Calu3 (cell line): ENCODE measurements at regions of chr22 and their contacts with region 1.

Region 1: GRCh38 chr22:33853200-33854097 is 66.8 kb downstream of the LARGE1 start:
- DNase-seq: peak; percentile 64
- H3K4me3 Mint-ChIP-seq: peak overlapping the region; percentile 77
- H3K27ac Mint-ChIP-seq: peak overlapping the region; percentile 87
- H3K4me1 Mint-ChIP-seq: peaks cover 8% of the 10 kb centered on the region
- H3K27me3 Mint-ChIP-seq: no peaks in the 10 kb centered on the region
- CTCF ChIP-seq: no peak

Region 2: DNA sequence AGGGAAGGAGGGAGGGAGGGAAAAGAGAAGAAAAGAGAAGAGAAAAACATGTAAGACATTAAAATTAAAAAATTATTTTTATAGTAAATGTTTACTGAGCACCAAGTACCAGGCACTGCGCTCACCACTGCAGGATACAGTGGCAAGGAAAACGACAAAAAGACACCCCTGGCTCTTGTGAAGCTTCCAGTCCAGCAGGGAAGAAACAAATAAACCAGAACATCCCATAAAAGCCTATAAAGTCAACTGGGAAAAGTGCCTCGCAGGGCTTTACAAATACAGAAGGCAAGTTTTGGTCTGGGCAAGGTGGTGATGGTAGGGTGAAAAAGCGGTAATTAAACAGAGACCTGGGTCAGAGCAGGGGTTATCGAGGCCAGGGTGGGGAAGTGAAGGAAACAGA is 33.2 kb after region 1 on chr22:
- CTCF ChIA-PET with region 1: interaction called, 10 read pairs
- intact Hi-C with region 1: no loop called
- DNase-seq: no peak
- H3K4me3 Mint-ChIP-seq: no peak overlapping the region
- H3K27ac Mint-ChIP-seq: no peak overlapping the region
- H3K4me1 Mint-ChIP-seq: no peaks in the 10 kb centered on the region
- H3K27me3 Mint-ChIP-seq: no peaks in the 10 kb centered on the region
- CTCF ChIP-seq: no peak